ENCODE measurements at regions of chr2 and their contacts with region 1.

Region 1: GRCh38 chr2:84970868-84971509 is at the start of gene KCMF1:
- DNase-seq: peak; percentile 89
- ATAC-seq: peak; percentile 85
- total RNA-seq, gene KCMF1: 87.5 TPM

Region 2: DNA sequence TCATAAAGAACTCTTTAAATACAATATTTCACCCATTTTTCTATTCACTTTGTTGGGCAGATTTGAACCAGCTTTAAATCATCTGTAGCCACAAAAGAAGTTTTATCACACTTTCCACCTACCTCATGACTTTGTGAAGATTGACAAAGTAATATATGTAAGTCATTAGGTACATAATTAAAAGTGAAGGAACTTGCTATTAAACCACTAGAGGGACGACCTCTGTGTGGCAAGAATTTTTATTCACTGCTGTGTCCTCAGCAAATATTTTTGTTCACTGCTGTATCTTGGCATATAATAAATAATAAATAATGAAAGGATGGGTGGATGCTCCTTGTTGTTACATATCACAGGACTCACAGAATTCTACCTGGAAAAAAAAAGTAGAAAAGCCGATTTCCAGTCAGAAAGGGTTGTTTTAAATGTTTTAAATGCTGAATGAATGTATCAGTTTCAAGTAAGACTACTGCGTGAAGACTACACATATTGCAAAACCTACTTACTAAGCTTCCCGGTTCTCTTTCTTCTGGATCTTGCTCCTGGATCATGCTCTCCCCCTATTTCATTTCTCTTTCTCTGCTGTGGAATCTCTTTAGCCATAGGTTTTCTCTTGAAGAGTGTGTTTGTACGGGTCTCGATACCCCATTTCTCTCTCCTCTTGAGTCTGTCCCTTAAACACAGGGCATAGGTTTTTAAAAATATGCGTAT is 44.8 kb after region 1 on chr2:
- intact Hi-C with region 1: loop called (anchors 2 kb)
- DNase-seq: no peak
- ATAC-seq: no peak